ENCODE measurements at regions of chrX and their contacts with region 1.

Region 1: DNA sequence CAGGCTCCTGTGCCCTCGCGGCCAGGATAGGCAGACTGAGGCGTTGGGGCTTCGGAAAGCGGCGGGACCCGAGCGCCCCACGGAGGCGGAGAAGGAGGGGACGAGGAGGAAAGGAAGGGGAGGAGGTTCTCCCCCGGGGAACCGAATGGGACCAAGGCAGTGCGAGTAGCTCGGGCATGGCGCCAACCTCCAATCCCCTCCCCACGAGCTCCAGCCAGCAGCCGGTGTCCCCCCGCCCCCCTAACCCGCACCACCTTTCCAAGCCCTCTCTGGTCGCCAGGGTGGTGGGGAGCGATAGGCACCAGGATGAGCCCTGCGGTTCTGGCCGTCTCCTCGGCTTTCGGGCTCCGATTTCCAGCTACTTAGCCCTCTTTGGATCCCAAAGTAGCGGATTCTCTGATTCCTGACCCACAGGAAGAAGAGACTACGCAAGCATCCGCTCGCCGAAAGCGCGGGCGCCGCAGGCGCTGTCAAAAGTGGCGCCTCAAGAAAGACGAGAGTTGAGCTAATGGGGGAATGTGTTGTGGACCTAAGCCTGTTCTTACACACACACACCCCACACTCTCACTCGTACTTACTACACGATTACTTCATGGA is 15.2 kb upstream of the ZIC3 start:
- DNase-seq: peak; percentile 43
- ATAC-seq: peak; percentile 16
- H3K4me3 Mint-ChIP-seq: peak overlapping the region; percentile 69
- H3K27ac Mint-ChIP-seq: peak overlapping the region; percentile 58; the same call in 1 of the 2 replicates
- H3K4me1 Mint-ChIP-seq: peaks cover 29% of the 10 kb centered on the region
- H3K27me3 Mint-ChIP-seq: peaks cover 38% of the 10 kb centered on the region
- CTCF ChIP-seq: no peak

Region 2: DNA sequence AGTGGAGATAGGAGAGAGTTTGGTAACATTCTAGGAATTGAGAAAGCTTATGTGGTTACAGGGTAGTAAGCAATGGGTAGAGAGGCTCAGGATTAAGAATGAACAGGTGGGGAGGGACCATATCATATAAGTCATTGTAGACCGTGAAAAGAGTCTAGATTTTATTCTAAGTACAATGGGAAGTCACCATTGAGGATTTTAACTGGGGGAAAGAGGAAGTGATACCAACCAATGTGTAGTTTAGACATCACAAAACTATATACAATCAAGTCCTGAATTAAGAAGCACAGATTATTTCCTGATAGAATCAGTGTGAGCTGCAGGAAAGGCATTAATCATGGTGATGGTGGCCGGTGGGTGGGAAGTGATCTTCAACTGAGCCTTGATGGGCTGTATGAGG is 163.1 kb before region 1 on chrX:
- CTCF ChIA-PET with region 1: no interaction called
- POLR2A ChIA-PET with region 1: no interaction called
- DNase-seq: no peak
- ATAC-seq: no peak
- H3K4me3 Mint-ChIP-seq: no peak overlapping the region
- H3K27ac Mint-ChIP-seq: no peak overlapping the region
- H3K4me1 Mint-ChIP-seq: no peaks in the 10 kb centered on the region
- H3K27me3 Mint-ChIP-seq: no peaks in the 10 kb centered on the region
- CTCF ChIP-seq: no peak

Region 3: DNA sequence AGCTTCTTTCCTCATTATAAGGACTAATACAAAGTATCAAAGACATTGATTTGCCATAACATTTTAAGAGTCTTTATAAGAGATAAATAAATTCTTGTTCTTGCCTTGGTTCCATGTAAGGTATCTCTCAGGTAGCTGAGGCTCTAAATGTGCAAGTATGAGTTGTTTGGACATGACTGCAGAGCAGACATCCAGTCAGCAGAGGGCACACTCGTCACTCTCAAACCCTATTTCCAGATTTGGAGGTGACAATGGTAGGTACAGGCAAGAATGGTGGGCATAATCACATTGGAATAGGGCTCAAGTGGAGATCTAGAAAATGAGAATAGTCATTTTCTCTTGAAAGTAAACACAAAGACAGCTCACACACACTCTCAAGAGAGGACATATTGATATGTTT is 118.2 kb before region 1 on chrX:
- CTCF ChIA-PET with region 1: interaction called, 27 read pairs
- POLR2A ChIA-PET with region 1: interaction called, 4 read pairs
- DNase-seq: peak; percentile 52
- ATAC-seq: peak; percentile 21
- H3K4me3 Mint-ChIP-seq: no peak overlapping the region
- H3K27ac Mint-ChIP-seq: no peak overlapping the region
- H3K4me1 Mint-ChIP-seq: peaks cover 27% of the 10 kb centered on the region
- H3K27me3 Mint-ChIP-seq: peaks cover 14% of the 10 kb centered on the region
- CTCF ChIP-seq: peak; percentile 44

Region 4: DNA sequence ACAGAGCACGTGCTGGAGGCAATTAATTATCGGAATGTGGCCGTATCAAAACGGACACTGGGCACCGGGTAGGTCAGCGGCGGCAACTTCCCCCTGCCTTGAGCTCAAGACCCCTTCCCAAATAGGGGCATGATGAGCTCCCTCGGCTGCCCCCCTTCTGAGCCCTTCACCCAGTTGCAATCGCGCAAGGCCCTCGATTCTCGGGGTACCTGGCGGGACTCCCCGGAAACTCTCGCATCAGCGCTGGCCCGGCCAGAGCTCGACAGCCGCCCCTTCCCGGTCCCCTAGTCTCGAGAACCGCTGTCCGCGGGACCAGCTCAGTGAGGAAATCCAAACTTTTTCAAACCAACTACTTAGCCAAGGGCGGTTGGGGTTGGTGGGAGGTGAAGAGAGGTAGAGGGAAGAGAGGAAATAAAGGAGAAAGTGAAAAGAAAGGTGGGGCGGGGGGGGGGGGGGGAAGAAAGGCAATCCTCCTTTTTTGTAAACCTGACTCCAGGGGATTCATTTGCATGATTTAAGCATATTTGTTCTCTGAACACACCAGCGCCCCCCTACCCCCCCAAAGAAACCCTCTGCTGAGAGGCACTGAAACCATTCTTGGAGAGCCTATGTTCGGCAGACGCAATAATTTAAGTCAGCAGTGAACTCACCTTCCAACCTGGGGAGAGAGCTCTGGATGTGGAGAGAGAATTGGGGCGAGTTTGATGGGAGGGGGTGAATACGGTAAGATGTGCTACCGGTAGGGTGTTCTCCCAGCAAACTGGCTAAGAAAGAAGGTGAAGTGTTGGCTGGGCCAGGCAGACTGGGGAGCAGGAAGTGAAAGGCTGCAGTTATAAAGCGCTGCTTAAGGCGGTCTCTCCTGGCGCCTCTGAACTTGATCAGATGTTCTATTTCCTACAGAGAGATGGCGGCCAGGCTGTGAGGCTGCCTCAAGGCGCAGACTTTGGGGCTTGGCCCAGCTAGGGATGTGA is 13.2 kb after region 1 on chrX:
- CTCF ChIA-PET with region 1: interaction called, 17 read pairs
- POLR2A ChIA-PET with region 1: interaction called, 30 read pairs
- DNase-seq: peak; percentile 28
- ATAC-seq: peak; percentile 53
- H3K4me3 Mint-ChIP-seq: peak overlapping the region; percentile 86
- H3K27ac Mint-ChIP-seq: peak overlapping the region; percentile 96
- H3K4me1 Mint-ChIP-seq: peaks cover 34% of the 10 kb centered on the region
- H3K27me3 Mint-ChIP-seq: no peaks in the 10 kb centered on the region
- CTCF ChIP-seq: no peak

Region 5: DNA sequence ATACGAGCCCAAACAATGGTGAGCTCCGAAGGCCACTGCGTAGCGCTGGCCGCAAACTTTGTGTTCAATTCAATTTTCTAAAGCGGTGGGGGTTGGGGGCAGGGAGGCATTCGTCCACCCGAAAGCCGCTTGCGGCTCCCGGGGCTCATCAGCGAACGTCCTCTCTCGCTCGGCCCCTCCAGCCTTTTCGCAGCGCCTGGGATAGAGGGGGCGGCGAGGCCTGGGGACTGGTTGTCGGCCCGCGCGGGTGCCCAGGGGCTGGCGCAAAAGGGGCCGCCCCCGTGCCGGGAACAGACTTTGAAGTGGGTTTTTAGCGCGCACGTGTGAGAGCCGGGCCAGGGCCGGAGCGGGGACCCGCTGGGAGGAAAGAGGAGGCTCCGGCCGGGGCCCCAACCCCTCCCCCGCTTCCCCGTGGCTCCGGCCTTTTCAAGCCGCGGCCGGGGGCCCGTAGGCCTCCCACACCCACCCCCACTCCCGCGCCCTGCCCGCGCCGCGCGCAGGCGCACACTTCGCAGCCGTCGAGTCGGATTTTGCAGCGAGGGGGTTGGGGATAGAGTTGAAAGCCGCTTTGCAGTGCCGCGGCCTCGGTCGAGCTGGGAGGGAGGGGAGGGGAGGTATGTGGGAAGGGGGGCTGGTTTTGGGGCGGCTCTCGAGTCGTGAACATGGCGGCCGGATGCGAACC is 23.5 kb after region 1 on chrX:
- CTCF ChIA-PET with region 1: interaction called, 3 read pairs
- POLR2A ChIA-PET with region 1: interaction called, 13 read pairs
- DNase-seq: peak; percentile 82
- ATAC-seq: peak; percentile 62
- H3K4me3 Mint-ChIP-seq: peak overlapping the region; percentile 97
- H3K27ac Mint-ChIP-seq: peak overlapping the region; percentile 99
- H3K4me1 Mint-ChIP-seq: peaks cover 67% of the 10 kb centered on the region
- H3K27me3 Mint-ChIP-seq: no peaks in the 10 kb centered on the region
- CTCF ChIP-seq: no peak